ENCODE measurements at regions of chr4 and their contacts with region 1.

Region 1: GRCh38 chr4:4430492-4431197 is 43.7 kb downstream of the NSG1 start:
- DNase-seq: peak; percentile 68
- H3K4me3 ChIP-seq: no peak overlapping the region
- H3K27me3 ChIP-seq: no peaks in the 10 kb centered on the region
- CTCF ChIP-seq: peak; percentile 80

Region 2: GRCh38 chr4:4368809-4369580 is 61.6 kb before region 1 on chr4:
- CTCF ChIA-PET with region 1: no interaction called
- POLR2A ChIA-PET with region 1: no interaction called
- DNase-seq: no peak
- H3K4me3 ChIP-seq: no peak overlapping the region
- H3K27me3 ChIP-seq: peaks cover 6% of the 10 kb centered on the region
- CTCF ChIP-seq: no peak

Region 3: GRCh38 chr4:4418676-4419390 is 11.8 kb before region 1 on chr4:
- CTCF ChIA-PET with region 1: interaction called, 17 read pairs
- POLR2A ChIA-PET with region 1: no interaction called
- DNase-seq: no peak
- H3K4me3 ChIP-seq: no peak overlapping the region
- H3K27me3 ChIP-seq: no peaks in the 10 kb centered on the region
- CTCF ChIP-seq: no peak